SK-N-SH (cell line): ENCODE measurements at regions of chr12 and their contacts with region 1.

Region 1: GRCh38 chr12:120200364-120200800 is 529 bp downstream of the RPLP0 start:
- DNase-seq: no peak
- H3K4me3 ChIP-seq: peak overlapping the region; percentile 85 to 93
- H3K27ac ChIP-seq: peak overlapping the region; percentile 54 to 73
- H3K4me1 ChIP-seq: peaks cover 17 to 27% of the 10 kb centered on the region in 2 experiments
- H3K27me3 ChIP-seq: no peaks in the 10 kb centered on the region
- CTCF ChIP-seq: no peak
- EP300 ChIP-seq: no peak
- RAD21 ChIP-seq: no peak

Region 2: DNA sequence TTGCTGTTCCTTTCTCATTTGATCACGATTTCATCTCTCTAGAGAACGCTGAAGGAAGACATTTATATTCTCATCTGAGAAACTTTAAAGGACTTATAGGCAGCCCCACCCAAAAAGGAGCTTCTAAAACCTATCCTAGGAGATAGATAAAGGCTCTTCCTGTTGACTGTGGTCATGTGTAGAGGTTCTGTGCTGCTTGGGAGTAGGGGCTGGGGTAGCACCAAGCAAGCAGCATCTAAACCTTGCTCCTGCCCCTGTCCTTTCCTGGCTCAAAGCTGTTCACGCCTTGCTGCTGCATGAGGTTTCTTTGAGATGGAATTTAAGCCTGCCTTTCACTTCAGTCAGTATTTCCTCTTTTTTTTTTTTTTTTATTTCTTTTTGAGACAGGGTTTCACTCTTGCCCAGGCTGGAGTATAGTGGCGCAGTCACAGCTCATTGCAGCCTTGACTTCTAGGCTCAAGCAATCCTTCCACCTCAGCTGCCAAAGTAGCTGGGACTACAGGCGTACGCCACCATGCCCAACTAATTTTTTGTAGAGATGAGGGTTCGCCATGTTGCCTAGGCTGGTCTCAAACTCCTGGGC is 125.3 kb before region 1 on chr12:
- CTCF ChIA-PET with region 1: no interaction called
- POLR2A ChIA-PET with region 1: no interaction called
- DNase-seq: no peak
- H3K4me3 ChIP-seq: no peak overlapping the region
- H3K27ac ChIP-seq: no peak overlapping the region
- H3K4me1 ChIP-seq: no peaks in the 10 kb centered on the region; a peak in 1 of 4 replicates
- H3K27me3 ChIP-seq: no peaks in the 10 kb centered on the region; the same call in 1 of the 2 replicates
- CTCF ChIP-seq: no peak
- EP300 ChIP-seq: no peak
- RAD21 ChIP-seq: no peak

Region 3: DNA sequence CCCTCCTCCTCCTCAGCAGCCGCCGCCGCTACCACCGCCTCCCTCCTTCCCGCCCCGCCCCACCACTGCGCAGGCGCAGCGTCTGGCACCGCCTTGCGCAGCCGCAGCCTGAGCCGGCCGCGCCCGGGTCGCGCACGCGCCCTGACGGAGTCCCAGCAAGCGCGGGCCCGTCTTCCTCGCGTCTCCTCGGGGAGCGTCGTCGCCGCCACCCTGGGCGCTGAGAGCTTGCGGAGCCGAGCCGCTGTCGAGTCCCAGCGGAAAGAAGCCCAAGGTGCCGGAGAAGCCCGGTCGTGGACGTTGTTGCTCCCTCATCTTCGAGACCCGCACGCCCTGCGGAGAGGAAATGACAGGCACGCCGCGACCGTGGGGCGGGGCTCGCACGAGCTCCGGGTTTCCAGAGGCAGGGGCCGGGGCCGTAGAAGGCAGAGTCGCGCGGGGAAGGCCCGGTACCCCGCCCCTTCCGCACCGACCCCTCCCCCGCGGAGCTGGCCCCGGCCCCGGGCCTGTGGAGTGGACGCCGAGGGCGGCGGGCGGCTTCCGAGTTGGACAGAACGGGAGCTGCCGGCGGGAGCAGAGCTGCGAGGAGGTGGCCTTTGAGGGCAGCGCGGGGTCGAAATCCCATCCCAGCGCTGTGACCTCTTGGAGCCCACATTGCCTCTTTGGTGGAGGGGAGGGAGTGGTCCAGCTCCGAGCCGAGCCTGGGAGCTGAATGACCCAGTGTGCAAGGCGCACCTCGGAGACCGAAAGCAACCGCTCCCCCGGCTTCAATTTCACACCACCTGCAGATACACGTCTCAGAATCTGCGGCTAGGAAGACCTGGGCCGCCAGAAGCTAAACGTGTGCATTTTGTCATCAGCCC is 83.4 kb before region 1 on chr12:
- CTCF ChIA-PET with region 1: no interaction called
- POLR2A ChIA-PET with region 1: interaction called, 23 read pairs
- DNase-seq: peak; percentile 100
- H3K4me3 ChIP-seq: peak overlapping the region; percentile 71 to 83
- H3K27ac ChIP-seq: peak overlapping the region; percentile 85 to 90
- H3K4me1 ChIP-seq: peaks cover 18 to 25% of the 10 kb centered on the region in 2 experiments
- H3K27me3 ChIP-seq: no peaks in the 10 kb centered on the region
- CTCF ChIP-seq: no peak
- EP300 ChIP-seq: no peak
- RAD21 ChIP-seq: no peak

Region 4: GRCh38 chr12:120145164-120145563 is 55.2 kb before region 1 on chr12:
- CTCF ChIA-PET with region 1: no interaction called
- POLR2A ChIA-PET with region 1: no interaction called
- DNase-seq: no peak
- H3K4me3 ChIP-seq: no peak overlapping the region
- H3K27ac ChIP-seq: no peak overlapping the region
- H3K4me1 ChIP-seq: no peaks in the 10 kb centered on the region
- H3K27me3 ChIP-seq: no peaks in the 10 kb centered on the region
- CTCF ChIP-seq: no peak
- EP300 ChIP-seq: no peak
- RAD21 ChIP-seq: no peak

Region 5: DNA sequence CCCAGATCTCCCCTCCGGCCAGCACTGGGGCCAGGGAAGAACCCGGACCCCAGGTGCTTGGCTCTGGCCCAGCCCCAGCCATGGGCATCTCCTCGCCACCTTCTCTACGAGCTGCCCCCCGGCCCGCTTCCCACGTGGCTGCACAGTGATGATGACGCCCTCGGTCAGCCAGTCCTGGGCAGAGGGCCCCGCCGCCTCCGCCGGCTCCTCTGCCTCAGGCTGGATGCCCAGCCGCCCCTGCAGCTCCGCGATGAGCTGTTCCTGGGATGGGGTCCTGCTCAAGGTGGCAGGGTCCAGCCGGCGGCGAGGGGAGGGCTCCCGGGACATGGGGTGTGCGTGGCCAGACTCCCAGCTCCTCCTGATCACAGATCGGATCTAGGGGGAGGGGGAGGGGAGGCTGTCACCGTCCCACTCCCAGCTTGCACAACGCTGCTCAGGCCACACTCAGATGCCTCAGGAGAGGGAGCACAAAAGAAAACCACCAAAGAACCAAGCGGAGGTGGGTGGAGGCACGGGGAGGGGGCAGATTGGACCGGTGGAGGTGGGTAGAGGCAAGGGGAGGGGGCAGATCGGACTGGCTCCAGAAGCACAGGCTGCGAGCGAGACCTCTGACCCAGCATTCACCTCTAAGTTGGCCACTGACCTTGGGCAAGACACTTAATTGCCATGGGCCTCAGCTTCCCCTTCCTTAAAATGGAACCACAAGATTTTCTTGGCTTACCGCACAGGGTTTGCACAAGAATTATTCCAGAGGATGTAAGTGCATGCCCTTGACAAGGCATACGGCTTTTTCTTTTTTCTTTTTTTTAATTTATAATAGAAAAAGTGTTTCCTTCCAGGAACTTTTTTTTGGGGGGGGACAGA is 16.6 kb after region 1 on chr12:
- CTCF ChIA-PET with region 1: interaction called, 15 read pairs
- POLR2A ChIA-PET with region 1: interaction called, 28 read pairs
- DNase-seq: peak; percentile 62
- H3K4me3 ChIP-seq: no peak overlapping the region
- H3K27ac ChIP-seq: no peak overlapping the region
- H3K4me1 ChIP-seq: no peaks in the 10 kb centered on the region
- H3K27me3 ChIP-seq: no peaks in the 10 kb centered on the region
- CTCF ChIP-seq: no peak
- EP300 ChIP-seq: no peak
- RAD21 ChIP-seq: no peak

Region 6: DNA sequence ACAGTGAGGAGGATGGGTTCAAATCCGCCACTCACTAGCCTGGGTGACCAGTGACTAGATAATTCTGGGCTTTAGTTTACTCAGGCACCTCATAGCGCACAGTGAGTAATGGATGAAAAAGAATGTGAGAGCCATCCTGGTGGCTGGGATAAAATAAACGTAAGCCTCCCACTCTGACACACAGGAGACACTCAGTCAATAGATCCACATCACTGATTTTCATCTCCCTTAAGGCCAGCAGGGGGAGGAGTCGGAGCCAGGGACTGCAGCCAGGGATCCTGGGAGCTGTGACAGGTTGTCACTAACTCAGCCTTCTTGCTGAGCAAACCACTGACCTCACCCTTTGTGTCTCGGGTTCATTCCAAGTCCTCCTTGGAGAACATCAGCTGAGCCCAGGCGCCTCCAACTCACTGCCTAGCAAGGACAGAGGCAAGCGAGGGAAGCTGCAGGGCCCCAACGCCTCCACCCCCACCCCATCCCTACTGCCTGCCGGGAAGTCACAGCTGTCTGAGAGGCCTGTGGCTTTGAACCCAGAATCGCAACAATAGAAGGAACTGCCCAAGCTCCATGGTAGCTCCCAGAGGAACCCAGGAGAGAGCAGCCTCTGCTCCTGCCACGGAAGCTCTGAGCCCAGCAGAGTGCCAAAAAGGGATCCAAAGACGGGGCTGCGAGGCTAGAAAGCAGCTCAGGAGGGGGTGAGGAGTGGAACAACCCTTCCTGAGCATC is 34.4 kb after region 1 on chr12:
- CTCF ChIA-PET with region 1: interaction called, 3 read pairs
- POLR2A ChIA-PET with region 1: interaction called, 75 read pairs
- DNase-seq: peak; percentile 67
- H3K4me3 ChIP-seq: no peak overlapping the region
- H3K27ac ChIP-seq: peak overlapping the region; percentile 80 to 100
- H3K4me1 ChIP-seq: peaks cover 41 to 75% of the 10 kb centered on the region in 2 experiments; a peak in 3 of 4 replicates
- H3K27me3 ChIP-seq: no peaks in the 10 kb centered on the region
- CTCF ChIP-seq: peak; percentile 59
- EP300 ChIP-seq: peak in 1 of 2 experiments; percentile 80; a peak in 2 of 4 replicates
- RAD21 ChIP-seq: peak; percentile 44